Panc1 (cell line): ENCODE measurements at regions of chr3 and their contacts with region 1.

Region 1: DNA sequence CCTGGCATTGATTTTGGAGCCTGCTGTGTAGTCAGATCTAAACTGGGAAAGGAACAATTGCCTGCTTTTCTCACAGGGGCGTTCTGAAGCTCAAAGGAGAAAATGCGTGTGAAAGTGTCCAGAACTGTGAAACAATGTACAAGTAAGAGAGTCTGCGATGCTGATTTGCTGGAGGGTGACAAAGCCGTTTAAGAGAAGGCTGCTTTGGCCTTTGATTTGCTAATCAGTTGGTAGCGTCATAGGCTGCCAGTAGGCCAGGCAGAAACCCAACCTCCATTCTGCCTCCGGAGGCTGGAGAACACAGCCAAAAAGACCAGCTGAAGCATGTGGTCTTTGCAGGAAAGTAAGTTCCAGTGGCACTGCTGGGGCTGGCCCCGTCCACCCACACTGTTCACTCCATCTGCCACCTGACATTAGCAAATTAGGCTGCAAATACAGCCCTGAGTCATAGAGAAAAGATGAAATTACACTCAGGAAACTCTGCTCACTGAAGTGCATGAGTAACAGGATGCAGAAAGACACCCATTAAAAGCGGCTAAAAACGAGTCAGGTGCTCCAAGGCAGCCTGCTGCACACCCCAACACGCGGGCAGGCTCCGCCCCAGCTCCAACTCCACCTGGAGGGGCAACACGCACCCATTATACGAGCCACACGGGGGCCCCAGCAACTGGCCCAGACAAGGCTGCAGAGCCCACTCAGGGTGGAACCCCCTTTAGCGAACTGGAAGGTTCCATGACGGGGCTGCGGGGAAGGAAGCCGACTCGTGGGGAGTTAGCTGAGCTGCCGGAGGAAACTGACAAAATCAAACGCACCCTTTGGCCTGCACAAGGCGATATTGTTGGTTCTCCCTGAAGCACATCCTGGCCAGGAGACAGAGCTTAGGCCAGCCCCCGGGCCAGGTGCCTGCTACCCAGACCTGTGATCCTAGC is 31.6 kb downstream of the ZDHHC19 start:
- DNase-seq: no peak
- ATAC-seq: no peak
- H3K4me3 ChIP-seq: no peak overlapping the region
- H3K27ac ChIP-seq: no peak overlapping the region
- H3K4me1 ChIP-seq: peaks cover 10% of the 10 kb centered on the region; the same call in 1 of the 2 replicates
- H3K27me3 ChIP-seq: no peaks in the 10 kb centered on the region
- CTCF ChIP-seq: no peak

Region 2: GRCh38 chr3:196081791-196082618 is 97.6 kb before region 1 on chr3 and contains the start of gene TFRC:
- CTCF ChIA-PET with region 1: no interaction called
- POLR2A ChIA-PET with region 1: no interaction called
- in situ Hi-C with region 1: loop called (anchors 25 kb)
- intact Hi-C with region 1: no loop called
- DNase-seq: no peak
- ATAC-seq: peak; percentile 97
- H3K4me3 ChIP-seq: peak within 1 kb of the TSS; percentile 54 to 97
- H3K27ac ChIP-seq: peak within 1 kb of the TSS; percentile 76
- H3K4me1 ChIP-seq: peaks cover 14% of the 10 kb centered on the region; the same call in 1 of the 2 replicates
- H3K27me3 ChIP-seq: no peaks in the 10 kb centered on the region
- CTCF ChIP-seq: no peak
- total RNA-seq, gene TFRC: 604 TPM

Region 3: DNA sequence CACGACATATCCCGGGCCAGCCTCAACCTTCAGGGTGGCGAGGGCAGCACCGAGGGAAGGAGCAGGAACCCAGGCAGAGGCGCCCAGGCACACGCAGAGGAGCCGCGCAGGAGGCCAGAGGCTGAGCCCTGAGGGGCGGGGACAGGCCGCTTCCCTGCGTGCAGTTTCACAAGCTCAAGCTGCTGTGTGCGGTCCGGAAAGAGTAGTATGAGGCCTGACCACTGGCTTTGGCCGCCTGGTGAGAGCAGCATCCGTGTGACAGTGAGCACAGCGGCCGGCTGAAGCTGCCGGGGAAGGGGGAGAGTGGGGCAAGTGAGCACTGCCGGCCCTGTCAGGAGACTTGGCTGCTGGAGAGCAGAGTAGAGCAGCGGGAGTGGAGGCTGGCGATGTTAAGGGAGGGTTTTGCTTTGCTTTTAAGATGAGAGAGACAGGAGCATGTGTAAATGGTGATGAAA is 22.9 kb after region 1 on chr3:
- CTCF ChIA-PET with region 1: interaction called, 13 read pairs
- POLR2A ChIA-PET with region 1: no interaction called
- in situ Hi-C with region 1: no loop called
- intact Hi-C with region 1: no loop called
- DNase-seq: no peak
- ATAC-seq: peak; percentile 37
- H3K4me3 ChIP-seq: peak overlapping the region in 1 of 2 experiments; percentile 15; a peak in 1 of 4 replicates
- H3K27ac ChIP-seq: no peak overlapping the region
- H3K4me1 ChIP-seq: no peaks in the 10 kb centered on the region
- H3K27me3 ChIP-seq: no peaks in the 10 kb centered on the region
- CTCF ChIP-seq: no peak